Breast epithelium (tissue), 4 donors: ENCODE measurements at regions of chr10 and their contacts with region 1.

Region 1: GRCh38 chr10:58291538-58292174 is 22.7 kb downstream of the CISD1 start:
- DNase-seq: no peak
- H3K4me3 ChIP-seq: no peak overlapping the region
- H3K27ac ChIP-seq: no peak overlapping the region
- H3K4me1 ChIP-seq: no peaks in the 10 kb centered on the region
- H3K27me3 ChIP-seq: no peaks in the 10 kb centered on the region
- CTCF ChIP-seq: peak; percentile 57 to 81 (median 62)
- POLR2A ChIP-seq: no peak

Region 2: DNA sequence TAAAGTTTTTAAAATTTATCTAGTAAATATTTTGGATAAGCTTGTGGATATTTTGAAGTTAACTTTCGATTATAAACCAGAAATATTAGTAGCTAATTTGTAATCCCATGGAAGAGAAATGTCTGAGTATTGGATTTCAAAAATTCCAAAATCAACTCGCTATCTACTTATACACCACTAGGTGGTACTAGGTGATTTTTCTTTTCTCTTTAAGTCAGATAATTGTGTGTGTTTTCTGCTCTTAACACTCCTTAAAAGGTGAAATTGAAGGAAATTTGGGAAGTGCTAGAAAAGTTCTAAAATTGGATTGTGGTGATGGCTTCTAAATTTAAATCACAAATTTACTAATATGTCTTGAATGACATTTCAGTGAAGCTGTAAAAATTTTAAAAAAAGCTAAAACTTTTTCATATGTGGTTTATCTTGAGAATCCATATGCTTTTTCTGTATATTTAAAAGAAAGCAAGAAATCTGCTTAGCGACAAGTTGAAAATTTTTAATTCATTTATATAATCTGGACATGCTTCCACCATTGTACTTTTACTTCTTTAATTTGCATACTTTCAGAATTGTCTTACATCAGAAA is 114.2 kb before region 1 on chr10:
- intact Hi-C with region 1: loop called (anchors 5 kb)
- DNase-seq: no peak
- H3K4me3 ChIP-seq: no peak overlapping the region
- H3K27ac ChIP-seq: no peak overlapping the region
- H3K4me1 ChIP-seq: no peaks in the 10 kb centered on the region
- H3K27me3 ChIP-seq: no peaks in the 10 kb centered on the region
- CTCF ChIP-seq: peak; percentile 57 to 72 (median 63)
- POLR2A ChIP-seq: no peak

Region 3: DNA sequence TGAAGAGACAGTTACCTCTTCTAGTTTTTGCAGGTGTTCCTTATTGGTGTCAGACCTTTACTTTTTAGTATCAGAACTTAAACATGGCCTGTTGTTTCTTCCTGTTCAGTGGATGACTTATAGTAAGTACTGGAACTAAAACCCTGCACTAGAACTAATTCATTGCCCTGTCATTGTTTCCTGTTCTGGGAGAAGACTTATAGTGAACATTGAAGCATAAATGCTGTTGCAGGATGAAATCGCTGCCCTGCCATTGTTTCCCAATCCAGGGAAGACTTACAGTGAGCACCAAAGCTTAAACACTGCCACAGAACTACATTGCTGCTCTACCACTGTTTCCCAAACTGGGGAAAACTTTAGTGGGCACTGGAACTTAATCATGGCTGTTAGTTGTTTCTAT is 37.0 kb before region 1 on chr10:
- intact Hi-C with region 1: no loop called
- DNase-seq: no peak
- H3K4me3 ChIP-seq: no peak overlapping the region
- H3K27ac ChIP-seq: no peak overlapping the region
- H3K4me1 ChIP-seq: no peaks in the 10 kb centered on the region
- H3K27me3 ChIP-seq: no peaks in the 10 kb centered on the region
- CTCF ChIP-seq: no peak
- POLR2A ChIP-seq: no peak